Heart left ventricle (tissue), 16 donors: ENCODE measurements at regions of chr6 and their contacts with region 1.

Region 1: GRCh38 chr6:67952121-67952520 is 683.0 kb upstream of the ADGRB3 start:
- DNase-seq: no peak
- ATAC-seq: no peak
- H3K4me3 ChIP-seq: no peak overlapping the region
- H3K27ac ChIP-seq: no peak overlapping the region
- H3K4me1 ChIP-seq: no peaks in the 10 kb centered on the region
- H3K27me3 ChIP-seq: no peaks in the 10 kb centered on the region
- CTCF ChIP-seq: no peak
- POLR2A ChIP-seq: no peak

Region 2: GRCh38 chr6:67896476-67896875 is 55.6 kb before region 1 on chr6:
- intact Hi-C with region 1: no loop called
- DNase-seq: no peak
- ATAC-seq: no peak
- H3K4me3 ChIP-seq: no peak overlapping the region
- H3K27ac ChIP-seq: no peak overlapping the region
- H3K4me1 ChIP-seq: no peaks in the 10 kb centered on the region
- H3K27me3 ChIP-seq: no peaks in the 10 kb centered on the region
- CTCF ChIP-seq: no peak
- POLR2A ChIP-seq: no peak

Region 3: GRCh38 chr6:68069921-68070710 is 118.0 kb after region 1 on chr6:
- intact Hi-C with region 1: no loop called
- DNase-seq: no peak
- ATAC-seq: no peak
- H3K4me3 ChIP-seq: no peak overlapping the region
- H3K27ac ChIP-seq: no peak overlapping the region
- H3K4me1 ChIP-seq: no peaks in the 10 kb centered on the region
- H3K27me3 ChIP-seq: no peaks in the 10 kb centered on the region
- CTCF ChIP-seq: no peak
- POLR2A ChIP-seq: no peak

Region 4: DNA sequence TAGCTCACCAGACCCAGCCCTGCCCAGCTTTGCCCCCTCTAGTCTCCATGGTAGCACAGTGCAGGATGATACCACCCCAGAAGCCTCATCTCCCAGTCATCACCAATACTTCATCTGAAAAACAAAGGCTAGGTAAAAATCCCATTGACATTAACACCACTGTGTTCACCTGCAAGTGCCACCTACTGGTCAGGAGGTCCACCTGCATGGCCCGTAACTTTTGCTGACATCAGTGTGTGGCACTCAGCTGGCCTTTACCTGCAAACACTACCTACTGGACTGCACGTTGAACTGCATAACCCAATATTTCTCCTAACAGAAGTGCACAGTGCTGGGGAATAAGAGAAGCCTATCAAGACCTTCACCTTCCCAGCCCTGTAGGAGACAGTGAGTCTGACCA is 448.3 kb after region 1 on chr6:
- intact Hi-C with region 1: loop called in 1 of 10 experiments (anchors 5 kb)
- DNase-seq: no peak
- ATAC-seq: no peak
- H3K4me3 ChIP-seq: no peak overlapping the region
- H3K27ac ChIP-seq: no peak overlapping the region
- H3K4me1 ChIP-seq: no peaks in the 10 kb centered on the region
- H3K27me3 ChIP-seq: no peaks in the 10 kb centered on the region
- CTCF ChIP-seq: no peak
- POLR2A ChIP-seq: no peak